ENCODE measurements at regions of chr6 and their contacts with region 1.

Region 1: GRCh38 chr6:155174576-155175211 is 89.1 kb upstream of the CLDN20 start:
- DNase-seq: peak; percentile 81
- ATAC-seq: peak; percentile 84
- H3K4me3 ChIP-seq: no peak overlapping the region
- H3K27ac ChIP-seq: no peak overlapping the region
- H3K4me1 ChIP-seq: peaks cover 10% of the 10 kb centered on the region
- H3K27me3 ChIP-seq: no peaks in the 10 kb centered on the region
- CTCF ChIP-seq: peak; percentile 81
- POLR2A ChIP-seq: no peak
- RAD21 ChIP-seq: peak; percentile 86

Region 2: GRCh38 chr6:154675602-154676088 is 499.0 kb before region 1 on chr6:
- CTCF ChIA-PET with region 1: interaction called, 3 read pairs
- POLR2A ChIA-PET with region 1: no interaction called
- dilution Hi-C with region 1: no loop called
- in situ Hi-C with region 1: loop called (anchors 5 kb)
- intact Hi-C with region 1: loop called (anchors 1 kb)
- DNase-seq: peak; percentile 96
- ATAC-seq: peak; percentile 98
- H3K4me3 ChIP-seq: no peak overlapping the region
- H3K27ac ChIP-seq: no peak overlapping the region
- H3K4me1 ChIP-seq: no peaks in the 10 kb centered on the region
- H3K27me3 ChIP-seq: peaks cover 2% of the 10 kb centered on the region; the same call in 1 of the 2 replicates
- CTCF ChIP-seq: peak; percentile 100; the same call in 1 of the 2 replicates
- POLR2A ChIP-seq: peak; percentile 56; the same call in 1 of the 2 replicates
- RAD21 ChIP-seq: peak; percentile 99

Region 3: DNA sequence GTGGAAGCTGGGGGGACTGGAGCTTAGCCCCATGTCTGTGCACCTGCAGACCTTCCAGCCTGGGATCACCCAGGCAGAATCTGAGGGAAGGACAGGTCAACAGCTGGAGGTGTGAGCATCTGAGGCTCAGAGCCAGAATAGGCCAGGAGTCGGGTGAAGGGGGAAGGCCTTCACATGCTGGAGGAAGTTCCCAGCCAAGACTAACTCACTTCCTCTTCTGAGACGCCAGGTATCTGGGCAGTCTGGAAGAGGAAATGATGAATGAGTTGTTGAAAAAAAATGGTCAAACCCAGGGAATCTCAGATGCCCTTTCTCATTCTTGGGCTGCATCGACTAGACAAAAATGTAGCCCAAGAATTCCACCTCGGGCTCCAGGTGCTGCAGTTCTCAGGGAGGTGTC is 253.2 kb before region 1 on chr6:
- CTCF ChIA-PET with region 1: interaction called, 4 read pairs
- POLR2A ChIA-PET with region 1: no interaction called
- dilution Hi-C with region 1: no loop called
- in situ Hi-C with region 1: loop called (anchors 5 kb)
- intact Hi-C with region 1: no loop called
- DNase-seq: no peak
- ATAC-seq: no peak
- H3K4me3 ChIP-seq: no peak overlapping the region
- H3K27ac ChIP-seq: no peak overlapping the region
- H3K4me1 ChIP-seq: no peaks in the 10 kb centered on the region
- H3K27me3 ChIP-seq: no peaks in the 10 kb centered on the region
- CTCF ChIP-seq: no peak
- POLR2A ChIP-seq: no peak
- RAD21 ChIP-seq: no peak

Region 4: GRCh38 chr6:155013457-155013876 is 161.2 kb before region 1 on chr6:
- CTCF ChIA-PET with region 1: no interaction called
- POLR2A ChIA-PET with region 1: interaction called, 4 read pairs
- dilution Hi-C with region 1: no loop called
- in situ Hi-C with region 1: loop called (anchors 10 kb)
- intact Hi-C with region 1: loop called (anchors 5 kb)
- DNase-seq: peak; percentile 24
- ATAC-seq: no peak
- H3K4me3 ChIP-seq: no peak overlapping the region
- H3K27ac ChIP-seq: no peak overlapping the region
- H3K4me1 ChIP-seq: peaks cover 10% of the 10 kb centered on the region
- H3K27me3 ChIP-seq: no peaks in the 10 kb centered on the region
- CTCF ChIP-seq: no peak
- POLR2A ChIP-seq: no peak
- RAD21 ChIP-seq: no peak

Region 5: DNA sequence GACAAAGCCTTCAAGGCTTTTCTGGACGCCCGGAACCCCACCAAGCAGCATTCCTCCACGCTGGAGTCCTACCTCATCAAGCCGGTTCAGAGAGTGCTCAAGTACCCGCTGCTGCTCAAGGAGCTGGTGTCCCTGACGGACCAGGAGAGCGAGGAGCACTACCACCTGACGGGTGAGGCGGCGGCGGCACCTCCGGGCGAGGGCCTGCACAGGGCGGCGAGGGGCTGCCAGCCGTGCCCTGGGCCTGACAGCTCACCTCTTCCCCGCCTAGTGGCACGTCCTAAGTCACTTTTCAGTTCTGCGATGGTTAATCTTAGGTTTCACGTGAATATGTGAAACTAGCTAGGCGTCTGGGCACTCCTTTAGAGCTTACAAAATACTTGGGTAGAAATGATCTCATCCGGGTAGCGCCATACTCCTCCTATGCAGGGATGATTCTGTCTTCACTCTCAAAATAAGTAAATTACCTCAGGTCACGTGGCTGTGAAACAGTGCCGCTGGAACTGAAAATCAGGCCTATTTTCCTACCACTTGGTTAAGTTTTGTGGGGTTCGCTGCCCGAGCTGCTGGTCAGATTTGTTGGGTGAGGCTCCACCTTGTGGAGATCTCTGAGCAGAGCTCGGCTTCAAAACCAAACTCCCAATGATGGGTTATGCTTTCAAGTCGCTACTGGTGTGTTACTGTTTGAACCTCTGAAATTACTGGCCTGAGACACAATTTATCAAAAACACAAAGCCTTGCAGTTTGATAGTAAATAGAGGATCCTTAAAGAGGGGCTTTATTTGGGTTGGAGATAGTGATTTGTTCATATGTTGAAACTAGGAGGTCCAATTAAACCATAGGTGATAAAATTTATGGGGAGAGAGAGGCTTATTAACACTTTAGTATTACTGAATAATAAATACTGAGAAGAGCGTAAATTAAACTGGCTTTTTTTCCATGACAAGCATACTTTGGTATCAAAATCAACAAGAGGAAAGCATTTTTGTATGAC is 73.6 kb after region 1 on chr6:
- CTCF ChIA-PET with region 1: interaction called, 15 read pairs
- POLR2A ChIA-PET with region 1: no interaction called
- dilution Hi-C with region 1: no loop called
- in situ Hi-C with region 1: loop called (anchors 5 kb)
- intact Hi-C with region 1: loop called (anchors 1 kb)
- DNase-seq: peak; percentile 77
- ATAC-seq: peak; percentile 86
- H3K4me3 ChIP-seq: no peak overlapping the region
- H3K27ac ChIP-seq: no peak overlapping the region
- H3K4me1 ChIP-seq: peaks cover 4% of the 10 kb centered on the region; the same call in 1 of the 2 replicates
- H3K27me3 ChIP-seq: no peaks in the 10 kb centered on the region
- CTCF ChIP-seq: peak; percentile 79
- POLR2A ChIP-seq: no peak
- RAD21 ChIP-seq: peak; percentile 87

Region 6: DNA sequence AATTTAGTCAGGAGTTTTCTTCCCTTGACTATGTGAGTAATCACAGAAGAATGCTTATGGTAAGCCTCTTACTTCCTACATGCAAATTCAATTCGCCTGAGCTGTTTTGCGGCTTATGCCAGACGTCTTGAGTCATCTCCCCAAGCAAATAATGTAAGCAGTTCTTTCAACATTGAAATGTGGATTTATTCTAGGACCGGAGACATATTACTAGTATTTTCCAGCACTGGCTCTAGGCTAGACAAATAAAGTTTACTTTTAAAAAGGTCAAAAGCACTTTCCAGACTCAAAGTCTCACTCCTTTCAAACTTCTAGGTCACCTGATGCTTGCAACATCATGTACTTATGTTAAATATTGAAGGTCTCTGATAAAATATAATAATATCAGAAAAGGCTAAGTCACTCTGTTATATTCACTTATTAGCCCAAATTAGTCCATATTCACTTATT is 319.0 kb after region 1 on chr6:
- CTCF ChIA-PET with region 1: interaction called, 3 read pairs
- POLR2A ChIA-PET with region 1: no interaction called
- dilution Hi-C with region 1: no loop called
- in situ Hi-C with region 1: no loop called
- intact Hi-C with region 1: loop called (anchors 5 kb)
- DNase-seq: peak; percentile 100
- ATAC-seq: peak; percentile 73
- H3K4me3 ChIP-seq: no peak overlapping the region
- H3K27ac ChIP-seq: no peak overlapping the region; the same call in 1 of the 2 replicates
- H3K4me1 ChIP-seq: peaks cover 18% of the 10 kb centered on the region
- H3K27me3 ChIP-seq: no peaks in the 10 kb centered on the region
- CTCF ChIP-seq: no peak
- POLR2A ChIP-seq: 0 out of 2 replicates have a peak, but pooled peaks have one; percentile 39
- RAD21 ChIP-seq: no peak

Region 7: DNA sequence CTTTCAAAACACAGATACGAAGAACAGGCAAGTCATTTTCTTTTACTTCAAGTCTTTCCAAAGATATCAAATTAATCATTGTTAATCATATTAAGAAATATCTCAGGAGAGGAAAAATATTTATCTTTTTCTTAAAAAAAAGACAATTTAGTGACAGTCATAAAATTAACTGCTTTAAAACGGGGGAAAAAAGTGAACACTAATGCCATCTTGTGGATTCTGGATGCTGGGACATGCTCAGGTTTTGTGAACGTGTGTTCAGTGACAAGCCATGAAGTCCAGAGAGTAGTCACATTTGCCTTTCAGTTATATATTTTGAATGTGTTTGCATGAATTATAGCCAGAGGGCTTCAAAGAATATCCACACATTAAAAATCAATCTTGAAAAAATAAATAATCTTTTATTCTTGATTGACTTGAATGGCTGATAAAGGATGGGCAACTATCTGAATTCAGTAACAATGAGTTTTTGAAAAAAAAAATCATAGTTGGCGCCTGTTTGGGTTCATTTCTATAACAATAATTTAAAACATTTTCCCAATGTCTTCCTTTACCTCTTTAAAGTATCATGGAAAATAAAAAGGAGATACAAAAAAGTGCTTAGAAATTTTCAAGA is 355.6 kb after region 1 on chr6:
- CTCF ChIA-PET with region 1: no interaction called
- POLR2A ChIA-PET with region 1: no interaction called
- dilution Hi-C with region 1: no loop called
- in situ Hi-C with region 1: no loop called
- intact Hi-C with region 1: no loop called
- DNase-seq: peak; percentile 60
- ATAC-seq: peak; percentile 54
- H3K4me3 ChIP-seq: no peak overlapping the region
- H3K27ac ChIP-seq: peak overlapping the region; percentile 50; the same call in 1 of the 2 replicates
- H3K4me1 ChIP-seq: 0 out of 2 replicates have a peak, but pooled peaks cover 2% of the 10 kb centered on the region
- H3K27me3 ChIP-seq: no peaks in the 10 kb centered on the region
- CTCF ChIP-seq: peak; percentile 71
- POLR2A ChIP-seq: no peak
- RAD21 ChIP-seq: peak; percentile 81

Region 8: DNA sequence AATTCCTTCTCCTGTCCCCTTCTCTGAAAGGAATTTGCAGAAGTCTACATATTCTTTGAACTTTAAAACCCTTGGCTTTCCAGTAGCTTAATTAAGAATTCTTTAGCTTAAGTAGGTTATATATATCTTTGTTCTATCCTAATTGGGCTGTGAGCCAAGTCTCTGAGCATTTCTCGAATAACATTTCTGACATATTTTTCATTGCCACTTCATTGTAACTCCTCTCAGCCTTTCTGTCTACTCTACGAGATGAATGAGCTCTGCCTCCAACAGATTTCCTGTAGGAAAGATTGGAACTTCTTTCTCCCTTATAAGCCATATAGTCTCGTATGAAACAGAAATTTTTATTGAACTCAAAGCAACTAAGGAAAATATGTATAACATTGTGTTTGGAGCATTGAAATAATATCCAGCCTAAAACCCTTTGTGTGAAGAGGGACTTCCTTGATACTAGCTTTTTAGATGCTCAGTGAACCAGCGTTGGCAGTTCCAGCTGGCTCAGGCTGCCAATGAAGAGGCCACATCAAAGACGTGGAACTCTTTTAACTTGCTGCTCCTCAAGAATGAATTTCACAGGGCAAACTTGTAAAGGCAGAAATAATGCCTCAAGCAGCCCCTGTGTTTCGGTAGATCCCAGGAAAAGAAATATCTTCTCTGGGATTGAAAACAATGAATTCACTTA is 368.6 kb after region 1 on chr6:
- CTCF ChIA-PET with region 1: no interaction called
- POLR2A ChIA-PET with region 1: no interaction called
- dilution Hi-C with region 1: no loop called
- in situ Hi-C with region 1: no loop called
- intact Hi-C with region 1: no loop called
- DNase-seq: no peak
- ATAC-seq: no peak
- H3K4me3 ChIP-seq: no peak overlapping the region
- H3K27ac ChIP-seq: no peak overlapping the region
- H3K4me1 ChIP-seq: no peaks in the 10 kb centered on the region; the same call in 1 of the 2 replicates
- H3K27me3 ChIP-seq: no peaks in the 10 kb centered on the region
- CTCF ChIP-seq: no peak
- POLR2A ChIP-seq: no peak
- RAD21 ChIP-seq: no peak

Region 9: GRCh38 chr6:155738602-155739105 is 564.0 kb after region 1 on chr6:
- CTCF ChIA-PET with region 1: no interaction called
- POLR2A ChIA-PET with region 1: no interaction called
- dilution Hi-C with region 1: no loop called
- in situ Hi-C with region 1: no loop called
- intact Hi-C with region 1: no loop called
- DNase-seq: no peak
- ATAC-seq: no peak
- H3K4me3 ChIP-seq: no peak overlapping the region
- H3K27ac ChIP-seq: no peak overlapping the region
- H3K4me1 ChIP-seq: 0 out of 2 replicates have a peak, but pooled peaks cover 2% of the 10 kb centered on the region
- H3K27me3 ChIP-seq: no peaks in the 10 kb centered on the region
- CTCF ChIP-seq: no peak
- POLR2A ChIP-seq: no peak
- RAD21 ChIP-seq: no peak

Region 10: DNA sequence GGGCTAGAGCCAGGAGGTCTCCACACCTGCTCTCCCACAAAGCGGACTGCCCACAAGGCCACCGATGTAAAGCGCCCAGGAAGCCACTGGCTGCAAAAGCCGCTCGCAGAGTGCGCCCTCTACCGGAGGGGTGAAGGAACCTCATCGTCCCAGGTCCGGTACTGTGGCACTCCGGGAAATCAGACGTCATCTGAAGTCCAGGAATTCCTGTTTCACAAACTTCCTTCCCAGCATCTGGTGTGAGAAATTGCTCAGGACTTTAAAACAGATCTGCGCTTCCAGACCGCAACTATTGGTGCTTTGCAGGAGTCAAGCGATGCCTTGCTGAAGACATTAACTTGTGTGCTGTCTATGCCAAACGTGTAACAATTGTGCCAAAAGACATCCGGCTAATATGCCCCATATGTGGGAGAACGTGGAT is 1487.3 kb after region 1 on chr6:
- CTCF ChIA-PET with region 1: no interaction called
- POLR2A ChIA-PET with region 1: no interaction called
- dilution Hi-C with region 1: no loop called
- in situ Hi-C with region 1: no loop called
- intact Hi-C with region 1: no loop called
- DNase-seq: no peak
- ATAC-seq: no peak
- H3K4me3 ChIP-seq: no peak overlapping the region
- H3K27ac ChIP-seq: no peak overlapping the region
- H3K4me1 ChIP-seq: peaks cover 7% of the 10 kb centered on the region
- H3K27me3 ChIP-seq: peaks cover 2% of the 10 kb centered on the region
- CTCF ChIP-seq: no peak
- POLR2A ChIP-seq: no peak
- RAD21 ChIP-seq: no peak

Measured in IMR-90 (cell line).